Gastrocnemius medialis (tissue), 4 donors: ENCODE measurements at regions of chr1 and their contacts with region 1.

Region 1: GRCh38 chr1:173476664-173477285 is 360 bp upstream of the PRDX6 start:
- DNase-seq: peak; percentile 93 to 97
- ATAC-seq: peak; percentile 69 to 77
- H3K4me3 ChIP-seq: peak overlapping the region; percentile 78 to 94 (median 94)
- H3K27ac ChIP-seq: peak overlapping the region; percentile 95 to 100 (median 98)
- H3K4me1 ChIP-seq: peaks cover 52 to 55% of the 10 kb centered on the region in 2 donors
- H3K27me3 ChIP-seq: no peaks in the 10 kb centered on the region
- CTCF ChIP-seq: peak in 1 of 5 experiments; percentile 5
- POLR2A ChIP-seq: no peak

Region 2: GRCh38 chr1:171781176-171781875 is 1695.4 kb before region 1 on chr1 and contains the start of gene METTL13:
- in situ Hi-C with region 1: no loop called
- intact Hi-C with region 1: loop called (anchors 2 kb)
- DNase-seq: peak; percentile 98
- ATAC-seq: peak; percentile 98 to 99
- H3K4me3 ChIP-seq: peak within 1 kb of the TSS; percentile 75 to 92 (median 87)
- H3K27ac ChIP-seq: peak within 1 kb of the TSS; percentile 88 to 95 (median 90)
- H3K4me1 ChIP-seq: peaks cover 34 to 35% of the 10 kb centered on the region in 2 donors
- H3K27me3 ChIP-seq: no peaks in the 10 kb centered on the region
- CTCF ChIP-seq: peak in 1 of 5 experiments; percentile 18
- POLR2A ChIP-seq: peak; percentile 82 to 90
- total RNA-seq, gene METTL13: 18.6 to 32.8 (median 23.5) TPM

Region 3: DNA sequence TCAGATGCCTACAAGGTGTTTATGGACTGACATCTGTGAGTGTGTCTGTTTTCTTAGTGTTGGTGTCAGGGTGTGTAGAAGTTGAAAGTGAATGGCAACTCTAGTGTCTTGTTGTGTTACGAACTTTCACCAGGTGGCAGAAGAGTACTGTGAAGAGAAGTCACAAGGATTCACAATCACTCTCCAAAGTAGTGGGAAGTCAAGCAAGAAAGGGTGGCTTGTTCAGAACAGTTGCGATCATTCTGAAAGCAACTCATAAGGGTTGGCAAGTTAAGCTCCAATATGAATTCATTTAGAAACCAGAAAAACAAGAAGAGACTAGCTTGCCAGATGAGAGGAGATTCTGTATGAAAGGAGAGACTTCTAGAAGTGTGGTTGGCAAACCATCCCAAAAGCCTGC is 731.8 kb before region 1 on chr1:
- in situ Hi-C with region 1: no loop called
- intact Hi-C with region 1: loop called (anchors 5 kb)
- DNase-seq: no peak
- ATAC-seq: peak; percentile 50 to 64
- H3K4me3 ChIP-seq: no peak overlapping the region
- H3K27ac ChIP-seq: peak overlapping the region in 3 of 4 donors; percentile 63 to 71 (median 68)
- H3K4me1 ChIP-seq: no peaks in the 10 kb centered on the region
- H3K27me3 ChIP-seq: no peaks in the 10 kb centered on the region
- CTCF ChIP-seq: peak in 3 of 5 experiments; percentile 34 to 43 (median 37)
- POLR2A ChIP-seq: no peak

Region 4: GRCh38 chr1:173341307-173341706 is 135.5 kb before region 1 on chr1:
- in situ Hi-C with region 1: no loop called
- intact Hi-C with region 1: no loop called
- DNase-seq: peak; percentile 4 to 18
- ATAC-seq: peak in 1 of 2 donors; percentile 46
- H3K4me3 ChIP-seq: no peak overlapping the region
- H3K27ac ChIP-seq: no peak overlapping the region
- H3K4me1 ChIP-seq: no peaks in the 10 kb centered on the region
- H3K27me3 ChIP-seq: no peaks in the 10 kb centered on the region
- CTCF ChIP-seq: no peak
- POLR2A ChIP-seq: no peak

Region 5: GRCh38 chr1:173669491-173669941 is 192.7 kb after region 1 on chr1 and contains the start of gene ANKRD45:
- in situ Hi-C with region 1: no loop called
- intact Hi-C with region 1: no loop called
- DNase-seq: no peak
- ATAC-seq: no peak
- H3K4me3 ChIP-seq: peak within 1 kb of the TSS; percentile 16 to 43 (median 36)
- H3K27ac ChIP-seq: no peak within 1 kb of the TSS
- H3K4me1 ChIP-seq: no peaks in the 10 kb centered on the region
- H3K27me3 ChIP-seq: peaks cover 3 to 9% (median 9%) of the 10 kb centered on the region in 3 donors
- CTCF ChIP-seq: no peak
- POLR2A ChIP-seq: no peak
- total RNA-seq, gene ANKRD45: not detected

Region 6: DNA sequence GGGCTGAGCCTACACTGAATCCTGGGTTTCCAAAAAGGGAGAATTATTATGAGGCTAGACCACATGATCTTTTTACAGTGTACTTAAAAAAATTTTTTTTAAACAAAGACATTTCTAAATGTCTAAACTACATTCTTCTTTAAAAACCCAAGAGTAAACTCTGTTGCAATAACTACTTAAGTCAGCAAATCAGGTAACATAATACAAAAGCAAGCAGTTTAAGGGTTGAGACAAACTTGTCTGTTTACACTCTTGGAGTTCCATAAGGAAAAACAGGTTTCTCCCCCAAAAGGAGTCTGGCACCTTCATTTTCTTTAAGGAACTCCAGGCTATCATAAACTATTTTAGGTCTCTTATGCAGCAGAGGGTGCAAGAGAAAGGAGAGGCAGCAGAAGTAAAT is 205.4 kb after region 1 on chr1:
- in situ Hi-C with region 1: no loop called
- intact Hi-C with region 1: no loop called
- DNase-seq: no peak
- ATAC-seq: no peak
- H3K4me3 ChIP-seq: no peak overlapping the region
- H3K27ac ChIP-seq: no peak overlapping the region
- H3K4me1 ChIP-seq: no peaks in the 10 kb centered on the region
- H3K27me3 ChIP-seq: no peaks in the 10 kb centered on the region
- CTCF ChIP-seq: no peak
- POLR2A ChIP-seq: no peak

Region 7: DNA sequence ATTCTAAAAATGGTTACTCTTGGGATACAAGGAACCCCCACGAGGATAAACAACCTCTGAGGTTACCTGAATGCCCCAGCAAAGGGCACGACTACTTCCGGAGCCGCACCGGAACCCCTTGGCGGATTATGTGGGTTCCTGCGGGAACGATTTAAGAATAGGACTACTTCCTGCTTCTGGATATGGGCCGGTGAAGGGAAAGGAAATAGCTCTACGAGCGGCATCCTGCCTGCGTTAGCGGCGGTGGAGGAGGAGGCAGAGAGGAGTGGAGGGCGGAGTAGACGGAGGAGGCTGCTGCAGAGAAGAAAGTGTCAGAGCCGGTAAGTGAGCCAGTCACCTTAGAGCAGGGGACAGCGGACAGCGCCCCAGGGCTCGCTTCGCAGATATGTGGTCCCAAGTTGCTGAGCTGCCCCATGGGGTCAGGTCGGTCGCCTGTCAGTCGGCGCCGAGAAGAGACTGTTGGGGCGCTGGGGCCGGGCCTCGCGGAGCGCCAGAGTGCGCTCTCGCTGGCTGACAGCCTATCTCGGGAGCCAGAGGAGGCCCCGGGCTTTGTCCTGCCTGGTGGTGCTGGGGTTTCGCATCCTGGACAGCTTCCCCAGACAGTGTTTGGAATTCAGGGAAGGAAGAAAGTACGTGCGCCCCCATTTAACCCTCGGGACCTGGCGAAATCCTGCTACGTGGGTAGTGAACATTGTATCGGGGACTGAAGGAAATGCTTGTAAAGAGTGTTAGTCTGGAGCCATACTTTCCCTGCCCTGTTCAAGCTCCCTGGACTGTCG is 238.2 kb after region 1 on chr1 and contains the start of gene KLHL20:
- in situ Hi-C with region 1: no loop called
- intact Hi-C with region 1: loop called (anchors 5 kb)
- DNase-seq: peak; percentile 56 to 75
- ATAC-seq: peak; percentile 99
- H3K4me3 ChIP-seq: peak within 1 kb of the TSS; percentile 80 to 98 (median 84)
- H3K27ac ChIP-seq: peak within 1 kb of the TSS; percentile 80 to 92 (median 85)
- H3K4me1 ChIP-seq: peaks cover 22% of the 10 kb centered on the region in 2 donors
- H3K27me3 ChIP-seq: peaks cover 0 to 5% (median 0%) of the 10 kb centered on the region in 3 donors
- CTCF ChIP-seq: no peak
- POLR2A ChIP-seq: peak; percentile 55 to 61
- total RNA-seq, gene KLHL20: 15.9 to 23.9 (median 23.4) TPM

Region 8: GRCh38 chr1:173867753-173868265 is 391.0 kb after region 1 on chr1 and contains the start of gene GAS5:
- in situ Hi-C with region 1: no loop called
- intact Hi-C with region 1: loop called (anchors 2 kb)
- DNase-seq: peak; percentile 99
- ATAC-seq: peak; percentile 93 to 97
- H3K4me3 ChIP-seq: peak within 1 kb of the TSS; percentile 63 to 97 (median 85)
- H3K27ac ChIP-seq: peak within 1 kb of the TSS; percentile 90 to 96 (median 95)
- H3K4me1 ChIP-seq: peaks cover 27 to 30% of the 10 kb centered on the region in 2 donors
- H3K27me3 ChIP-seq: no peaks in the 10 kb centered on the region
- CTCF ChIP-seq: peak in 1 of 5 experiments; percentile 13
- POLR2A ChIP-seq: peak; percentile 93 to 97
- total RNA-seq, gene GAS5: 91.9 to 138 (median 98.4) TPM

Region 9: DNA sequence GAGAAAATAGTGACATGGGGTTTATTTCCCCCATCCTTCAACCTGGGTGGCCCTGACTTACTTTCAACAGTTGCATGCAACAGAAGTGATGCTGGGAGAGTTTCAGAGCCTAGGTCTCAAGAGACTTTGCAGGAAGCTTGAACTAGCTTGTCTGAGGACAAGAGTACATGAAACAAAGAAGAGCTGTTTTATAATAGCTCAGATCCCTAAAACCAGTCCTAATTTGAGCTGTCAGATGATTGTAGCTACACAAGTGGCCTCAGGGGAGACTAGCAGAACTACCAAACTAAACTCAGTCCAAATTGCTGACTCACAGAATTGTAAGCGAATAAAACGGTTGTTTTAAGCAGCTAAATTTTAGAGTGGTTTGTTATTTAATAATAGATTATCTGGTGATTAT is 528.3 kb after region 1 on chr1:
- in situ Hi-C with region 1: no loop called
- intact Hi-C with region 1: no loop called
- DNase-seq: no peak
- ATAC-seq: peak; percentile 23 to 41
- H3K4me3 ChIP-seq: no peak overlapping the region
- H3K27ac ChIP-seq: peak overlapping the region in 3 of 4 donors; percentile 8 to 84 (median 38)
- H3K4me1 ChIP-seq: peaks cover 39 to 54% of the 10 kb centered on the region in 2 donors
- H3K27me3 ChIP-seq: no peaks in the 10 kb centered on the region
- CTCF ChIP-seq: no peak
- POLR2A ChIP-seq: no peak

Region 10: DNA sequence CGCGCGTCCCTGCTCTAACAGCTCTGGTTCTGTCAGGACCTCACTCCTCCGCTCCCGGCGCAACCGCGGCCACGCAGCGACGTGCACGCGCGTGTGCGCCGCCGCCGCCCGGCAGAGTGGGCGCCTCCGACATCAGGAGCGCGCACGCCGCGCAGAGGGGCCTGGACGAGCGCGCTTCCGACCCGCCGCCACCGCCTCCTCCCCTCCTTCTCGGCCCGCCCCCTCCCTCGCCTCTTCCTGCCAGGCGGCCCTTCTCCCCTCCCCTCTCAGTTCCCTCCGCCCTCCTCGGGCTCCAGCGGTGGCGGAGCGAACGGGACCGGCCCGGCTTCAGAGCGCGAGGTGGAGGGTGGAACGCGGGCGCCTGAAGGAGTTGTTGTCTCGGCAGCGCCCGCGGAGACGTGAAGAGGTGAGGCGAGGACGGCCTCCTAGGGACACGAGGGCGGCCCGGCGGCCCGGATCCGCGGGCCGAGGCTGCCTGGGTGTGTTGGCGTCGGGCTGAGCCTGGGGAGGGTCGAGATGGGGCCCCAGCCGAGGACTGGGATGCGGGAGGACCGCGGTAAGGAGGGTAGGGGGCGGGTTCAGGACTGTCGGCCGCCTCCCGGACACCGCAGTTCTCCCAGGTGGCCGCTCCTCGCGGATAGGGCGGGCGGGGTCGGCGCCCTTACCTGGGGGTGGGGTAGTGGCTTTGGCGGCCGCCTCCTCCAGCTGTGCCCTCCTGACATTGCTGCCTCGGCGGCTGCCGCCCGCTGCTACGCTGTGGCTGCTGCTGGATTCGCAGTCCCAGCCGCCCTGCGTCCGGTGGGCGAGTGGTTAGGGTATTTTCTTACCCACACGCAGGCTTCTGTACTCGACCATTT is 682.7 kb after region 1 on chr1 and contains the start of gene RABGAP1L:
- in situ Hi-C with region 1: no loop called
- intact Hi-C with region 1: loop called (anchors 5 kb)
- DNase-seq: peak; percentile 88 to 90
- ATAC-seq: peak; percentile 94
- H3K4me3 ChIP-seq: peak within 1 kb of the TSS; percentile 90 to 100 (median 93)
- H3K27ac ChIP-seq: peak within 1 kb of the TSS; percentile 92 to 98 (median 94)
- H3K4me1 ChIP-seq: peaks cover 3 to 11% of the 10 kb centered on the region in 2 donors
- H3K27me3 ChIP-seq: no peaks in the 10 kb centered on the region
- CTCF ChIP-seq: peak in 2 of 5 experiments; percentile 9 to 17
- POLR2A ChIP-seq: peak; percentile 73 to 79
- total RNA-seq, gene RABGAP1L: 8.8 to 22.2 (median 14.9) TPM